SK-N-SH (cell line): ENCODE measurements at regions of chr17 and their contacts with region 1.

Region 1: GRCh38 chr17:62045109-62045905 is 19.8 kb downstream of the MED13 start:
- DNase-seq: no peak
- H3K4me3 ChIP-seq: no peak overlapping the region
- H3K27ac ChIP-seq: no peak overlapping the region
- H3K4me1 ChIP-seq: no peaks in the 10 kb centered on the region; a peak in 1 of 4 replicates
- H3K27me3 ChIP-seq: no peaks in the 10 kb centered on the region
- CTCF ChIP-seq: no peak
- EP300 ChIP-seq: no peak
- RAD21 ChIP-seq: no peak

Region 2: GRCh38 chr17:62030209-62030608 is 15.1 kb before region 1 on chr17:
- CTCF ChIA-PET with region 1: interaction called, 12 read pairs
- POLR2A ChIA-PET with region 1: interaction called, 3 read pairs
- DNase-seq: no peak
- H3K4me3 ChIP-seq: no peak overlapping the region
- H3K27ac ChIP-seq: no peak overlapping the region
- H3K4me1 ChIP-seq: no peaks in the 10 kb centered on the region; a peak in 1 of 4 replicates
- H3K27me3 ChIP-seq: no peaks in the 10 kb centered on the region
- CTCF ChIP-seq: no peak
- EP300 ChIP-seq: no peak
- RAD21 ChIP-seq: no peak